HepG2 (cell line): ENCODE measurements at regions of chr14 and their contacts with region 1.

Region 1: GRCh38 chr14:76784266-76785264 is 23.3 kb downstream of the VASH1 start:
- DNase-seq: peak; percentile 79
- ATAC-seq: peak; percentile 99
- H3K4me3 ChIP-seq: no peak overlapping the region
- H3K27ac ChIP-seq: no peak overlapping the region
- H3K4me1 ChIP-seq: no peaks in the 10 kb centered on the region
- H3K27me3 ChIP-seq: no peaks in the 10 kb centered on the region
- CTCF ChIP-seq: peak; percentile 96
- EP300 ChIP-seq: no peak
- POLR2A ChIP-seq: no peak
- RAD21 ChIP-seq: peak; percentile 78

Region 2: GRCh38 chr14:76710056-76711010 is 74.2 kb before region 1 on chr14:
- CTCF ChIA-PET with region 1: interaction called, 38 read pairs
- POLR2A ChIA-PET with region 1: interaction called, 3 read pairs
- in situ Hi-C with region 1: loop called (anchors 5 kb)
- intact Hi-C with region 1: loop called (anchors 1 kb)
- DNase-seq: peak; percentile 28
- ATAC-seq: peak; percentile 26; the same call in 1 of the 3 replicates
- H3K4me3 ChIP-seq: no peak overlapping the region
- H3K27ac ChIP-seq: no peak overlapping the region
- H3K4me1 ChIP-seq: no peaks in the 10 kb centered on the region
- H3K27me3 ChIP-seq: peaks cover 0 to 4% of the 10 kb centered on the region in 2 experiments; a peak in 2 of 5 replicates
- CTCF ChIP-seq: peak; percentile 76
- EP300 ChIP-seq: no peak
- POLR2A ChIP-seq: no peak
- RAD21 ChIP-seq: peak; percentile 54; the same call in 1 of the 2 replicates

Region 3: DNA sequence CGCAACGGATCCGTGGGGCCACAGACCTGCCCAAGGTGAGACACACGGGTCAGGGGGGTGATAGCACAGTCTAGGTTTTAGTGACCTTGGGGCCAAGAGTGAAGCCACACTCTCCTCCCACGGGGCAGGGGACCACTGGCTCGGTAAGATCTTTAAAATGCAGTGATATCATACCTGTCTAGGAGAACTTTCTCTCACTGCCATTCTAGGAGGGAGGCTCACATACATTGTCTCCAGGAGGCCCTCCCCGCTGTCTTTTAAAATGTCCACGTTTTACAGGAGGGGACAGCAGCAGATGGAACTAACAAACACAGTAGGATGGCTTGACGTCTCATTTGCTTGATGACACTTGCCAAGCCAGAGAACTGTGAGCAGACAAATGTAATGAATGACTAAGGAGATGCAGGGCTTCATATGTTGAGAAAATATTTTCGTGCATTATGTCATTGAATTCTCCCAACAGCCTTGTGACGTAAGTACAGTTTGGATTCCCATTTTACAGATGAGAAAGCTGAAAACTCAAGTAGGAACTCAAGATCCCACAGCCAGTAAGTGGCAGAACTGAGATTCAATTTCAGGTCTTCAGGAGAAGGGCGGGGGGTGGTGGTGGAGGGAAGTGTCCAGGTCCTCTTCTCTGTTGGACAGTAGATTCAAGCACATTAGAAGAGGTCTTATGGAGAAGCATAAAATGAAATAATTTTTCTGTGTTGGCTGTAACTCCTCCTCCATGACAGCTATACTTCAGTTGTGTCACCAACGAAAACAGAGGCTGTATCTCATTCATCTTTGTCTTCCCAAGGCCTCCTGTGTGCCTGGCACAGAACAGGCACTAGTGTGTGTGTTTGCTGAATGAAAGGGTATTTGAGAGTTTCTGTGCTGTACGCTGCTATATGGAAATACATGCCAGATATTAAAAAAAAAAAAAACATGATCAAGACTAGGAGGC is 21.2 kb before region 1 on chr14:
- CTCF ChIA-PET with region 1: no interaction called
- POLR2A ChIA-PET with region 1: no interaction called
- in situ Hi-C with region 1: no loop called
- intact Hi-C with region 1: no loop called
- DNase-seq: no peak
- ATAC-seq: no peak
- H3K4me3 ChIP-seq: no peak overlapping the region
- H3K27ac ChIP-seq: no peak overlapping the region
- H3K4me1 ChIP-seq: 0 out of 2 replicates have a peak, but pooled peaks cover 7% of the 10 kb centered on the region
- H3K27me3 ChIP-seq: peaks cover 3 to 40% of the 10 kb centered on the region in 2 experiments; a peak in 4 of 5 replicates
- CTCF ChIP-seq: no peak
- EP300 ChIP-seq: no peak
- POLR2A ChIP-seq: no peak
- RAD21 ChIP-seq: no peak